Endothelial cell of umbilical vein (primary cell): ENCODE measurements at regions of chr6 and their contacts with region 1.

Region 1: GRCh38 chr6:125611573-125612344 is 137.7 kb upstream of the HEY2 start:
- DNase-seq: peak; percentile 96
- H3K4me3 ChIP-seq: peak overlapping the region in 1 of 3 experiments; percentile 4
- H3K27ac ChIP-seq: peak overlapping the region; percentile 62
- H3K4me1 ChIP-seq: peaks cover 17% of the 10 kb centered on the region
- H3K27me3 ChIP-seq: peaks cover 0 to 9% of the 10 kb centered on the region in 2 experiments
- CTCF ChIP-seq: no peak
- POLR2A ChIP-seq: no peak

Region 2: DNA sequence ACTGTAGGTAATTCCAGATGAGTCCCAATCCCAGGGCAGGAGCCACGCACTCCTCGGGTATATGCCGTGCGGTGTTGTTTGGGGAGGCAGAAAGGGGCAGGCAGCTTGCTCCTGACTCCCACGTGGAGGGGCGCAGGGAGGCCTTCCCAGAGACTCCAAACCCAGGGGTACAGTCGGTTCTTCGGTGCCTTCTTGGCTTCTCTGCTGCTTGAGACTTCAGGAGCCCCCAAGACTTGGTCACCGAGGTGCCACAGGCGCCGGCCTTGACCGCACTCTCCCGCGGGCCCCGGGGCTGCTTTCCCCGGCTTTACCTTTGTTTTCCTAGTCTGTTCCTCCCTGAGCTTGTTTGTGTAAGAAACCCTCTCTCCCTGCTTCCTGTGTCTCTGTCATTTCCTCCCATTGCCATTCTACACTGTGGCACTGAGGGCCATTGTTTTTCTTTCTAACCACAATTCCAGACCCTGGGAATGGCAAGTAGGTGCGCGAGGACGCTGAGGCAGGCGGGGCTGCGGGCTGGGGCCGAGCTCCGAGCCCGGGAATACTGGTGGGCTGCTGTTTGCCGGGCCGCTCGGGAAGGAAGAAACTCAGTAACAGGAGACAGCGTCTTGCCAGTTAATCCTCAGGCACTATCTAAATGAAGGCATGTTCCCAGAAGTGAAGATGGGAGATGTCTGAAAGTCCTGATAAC is 77.9 kb before region 1 on chr6:
- CTCF ChIA-PET with region 1: interaction called, 4 read pairs
- POLR2A ChIA-PET with region 1: no interaction called
- dilution Hi-C with region 1: no loop called
- intact Hi-C with region 1: loop called (anchors 2 kb)
- DNase-seq: peak; percentile 8
- H3K4me3 ChIP-seq: peak overlapping the region in 2 of 3 experiments; percentile 27 to 44
- H3K27ac ChIP-seq: peak overlapping the region; percentile 28
- H3K4me1 ChIP-seq: peaks cover 14% of the 10 kb centered on the region
- H3K27me3 ChIP-seq: peaks cover 4 to 29% of the 10 kb centered on the region in 2 experiments
- CTCF ChIP-seq: no peak
- POLR2A ChIP-seq: no peak

Region 3: DNA sequence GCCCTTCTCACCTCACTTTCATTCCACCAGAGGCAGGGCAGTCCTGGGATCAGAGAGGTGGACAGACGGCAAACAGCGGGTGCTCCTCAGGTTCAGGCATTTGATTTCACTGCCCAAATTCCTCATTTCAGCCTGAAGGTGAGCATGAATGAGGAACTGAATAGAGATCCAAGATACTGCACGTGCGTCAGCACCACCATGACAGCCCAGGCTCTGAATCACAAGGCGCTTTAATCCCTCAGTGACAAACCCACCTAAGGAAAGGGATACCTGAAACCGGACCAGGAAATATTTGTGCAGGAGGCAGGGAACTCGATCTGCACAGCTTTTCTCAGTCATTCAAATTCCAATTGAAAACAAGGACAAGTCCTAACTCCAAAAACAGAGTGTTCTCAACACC is 37.2 kb before region 1 on chr6:
- CTCF ChIA-PET with region 1: no interaction called
- POLR2A ChIA-PET with region 1: no interaction called
- dilution Hi-C with region 1: no loop called
- intact Hi-C with region 1: no loop called
- DNase-seq: no peak
- H3K4me3 ChIP-seq: no peak overlapping the region
- H3K27ac ChIP-seq: no peak overlapping the region
- H3K4me1 ChIP-seq: no peaks in the 10 kb centered on the region
- H3K27me3 ChIP-seq: peaks cover 5 to 38% of the 10 kb centered on the region in 2 experiments
- CTCF ChIP-seq: no peak
- POLR2A ChIP-seq: no peak